ENCODE measurements at regions of chr18 and their contacts with region 1.

Region 1: DNA sequence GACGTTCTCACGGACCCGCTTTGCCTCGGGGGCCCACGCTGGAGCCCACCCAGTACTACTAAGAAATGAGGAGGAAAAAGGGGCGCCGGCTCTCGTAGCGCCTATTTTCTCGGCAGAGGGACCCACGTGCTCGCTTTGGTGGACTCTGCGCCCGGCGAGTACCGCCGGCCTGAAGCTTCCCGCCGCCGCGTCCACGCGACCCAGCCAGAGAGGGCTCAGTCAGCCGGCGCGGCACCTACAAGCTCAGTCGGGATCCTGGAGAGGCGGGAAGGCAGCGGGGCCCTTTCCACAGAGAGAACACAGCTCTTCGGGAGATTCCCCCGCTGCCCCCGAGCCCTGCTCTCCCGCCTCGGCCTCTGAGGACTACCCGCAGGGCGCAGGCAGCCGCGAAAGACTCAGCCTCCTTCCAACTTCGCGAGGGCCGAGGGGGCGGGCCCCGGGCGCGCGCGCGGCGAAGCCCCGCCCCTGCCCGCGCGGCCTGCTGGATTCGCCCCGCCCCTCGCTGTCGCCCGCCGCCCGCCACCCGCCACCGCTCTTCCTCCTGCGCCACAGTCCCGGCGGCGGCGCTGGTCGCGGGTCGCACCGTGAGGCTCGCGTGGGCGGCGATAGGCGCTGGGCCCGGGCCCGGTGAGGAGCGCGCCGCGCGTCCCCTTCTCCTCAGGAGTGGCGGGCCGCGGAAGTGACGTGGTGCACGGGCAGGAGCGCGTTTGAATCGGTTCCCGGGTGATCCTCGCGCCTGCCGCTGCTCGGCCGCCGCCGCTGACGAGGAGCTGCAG is at the start of gene SMCHD1:
- DNase-seq: peak; percentile 96
- ATAC-seq: peak; percentile 82
- H3K4me3 Mint-ChIP-seq: peak within 1 kb of the TSS; percentile 95
- H3K27ac Mint-ChIP-seq: peak within 1 kb of the TSS; percentile 98
- H3K4me1 Mint-ChIP-seq: peaks cover 42% of the 10 kb centered on the region
- H3K27me3 Mint-ChIP-seq: no peaks in the 10 kb centered on the region
- CTCF ChIP-seq: no peak
- total RNA-seq, gene SMCHD1: 97.4 to 98.9 TPM

Region 2: GRCh38 chr18:2571200-2572143 is 83.9 kb before region 1 on chr18 and contains the starts of genes METTL4 and NDC80:
- CTCF ChIA-PET with region 1: interaction called, 3 read pairs
- POLR2A ChIA-PET with region 1: interaction called, 23 read pairs
- intact Hi-C with region 1: loop called (anchors 5 kb)
- DNase-seq: peak; percentile 90
- ATAC-seq: peak; percentile 90
- H3K4me3 Mint-ChIP-seq: peak within 1 kb of the TSS; percentile 99
- H3K27ac Mint-ChIP-seq: peak within 1 kb of the TSS; percentile 99
- H3K4me1 Mint-ChIP-seq: peaks cover 44% of the 10 kb centered on the region
- H3K27me3 Mint-ChIP-seq: no peaks in the 10 kb centered on the region
- CTCF ChIP-seq: no peak
- total RNA-seq, gene METTL4: 18.9 to 20.5 TPM
- total RNA-seq, gene NDC80: 81.3 to 82.2 TPM

Region 3: DNA sequence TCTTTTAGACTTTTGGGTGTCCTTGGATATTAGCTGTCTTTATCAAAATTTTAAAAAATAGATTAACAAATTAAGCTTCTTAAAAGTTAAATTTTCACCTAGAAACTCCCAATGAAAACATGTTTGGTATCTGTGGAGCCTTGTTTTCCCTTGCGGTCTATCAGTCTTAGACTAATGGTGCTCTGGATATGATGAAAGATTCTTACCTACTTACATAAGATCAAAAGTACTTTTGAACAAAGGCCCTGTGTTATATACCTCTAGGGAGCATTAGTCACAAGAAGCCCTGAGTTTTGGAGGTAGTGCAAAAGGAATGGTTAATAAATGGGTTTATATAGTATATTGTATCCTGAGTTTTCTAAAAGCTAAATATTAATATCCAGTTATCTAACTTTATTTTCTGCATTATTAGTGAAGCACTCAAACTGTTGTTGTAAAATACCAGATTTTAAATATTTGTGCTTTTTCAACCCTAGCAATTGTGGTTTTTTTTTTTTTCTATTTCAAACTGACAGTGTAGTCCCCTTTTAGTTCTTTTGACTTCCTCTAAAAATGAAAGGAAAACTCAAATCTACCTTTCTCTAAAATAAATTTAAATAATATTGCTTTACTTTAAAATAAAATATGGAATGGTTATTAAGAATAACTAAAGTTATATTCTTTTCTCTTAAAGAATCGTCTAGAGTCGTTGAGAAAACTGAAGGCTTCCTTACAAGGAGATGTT is 65.9 kb before region 1 on chr18:
- CTCF ChIA-PET with region 1: interaction called, 4 read pairs
- POLR2A ChIA-PET with region 1: interaction called, 21 read pairs
- intact Hi-C with region 1: no loop called
- DNase-seq: no peak
- ATAC-seq: peak; percentile 81
- H3K4me3 Mint-ChIP-seq: peak overlapping the region; percentile 53
- H3K27ac Mint-ChIP-seq: peak overlapping the region; percentile 94
- H3K4me1 Mint-ChIP-seq: peaks cover 56% of the 10 kb centered on the region
- H3K27me3 Mint-ChIP-seq: no peaks in the 10 kb centered on the region
- CTCF ChIP-seq: no peak

Region 4: DNA sequence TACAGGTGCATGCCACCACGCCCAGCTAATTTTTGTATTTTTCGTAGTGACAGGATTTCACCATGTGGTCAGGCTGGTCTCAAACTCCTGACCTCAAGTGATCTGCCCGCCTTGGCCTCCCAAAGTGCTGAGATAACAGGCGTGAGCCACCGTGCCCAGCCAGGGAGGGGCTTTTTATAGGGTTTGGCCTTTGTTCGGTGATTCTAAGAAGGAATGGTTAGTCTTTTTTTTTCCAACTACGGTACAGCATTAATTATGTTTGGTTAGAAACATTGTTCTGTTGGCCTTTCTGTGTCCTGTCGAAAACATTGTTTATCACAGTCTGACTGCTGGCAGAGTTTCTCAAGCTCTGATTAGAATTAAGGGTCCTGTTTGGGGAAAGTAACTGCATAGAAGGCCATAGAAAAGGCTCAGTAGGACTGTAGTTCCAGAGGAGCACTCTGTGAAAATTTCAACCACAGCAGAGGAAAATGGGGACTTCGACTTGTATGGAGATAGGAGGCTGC is 19.2 kb before region 1 on chr18:
- CTCF ChIA-PET with region 1: interaction called, 4 read pairs
- POLR2A ChIA-PET with region 1: interaction called, 76 read pairs
- intact Hi-C with region 1: no loop called
- DNase-seq: no peak
- ATAC-seq: peak; percentile 10
- H3K4me3 Mint-ChIP-seq: peak overlapping the region; percentile 60
- H3K27ac Mint-ChIP-seq: peak overlapping the region; percentile 97
- H3K4me1 Mint-ChIP-seq: peaks cover 73% of the 10 kb centered on the region
- H3K27me3 Mint-ChIP-seq: no peaks in the 10 kb centered on the region
- CTCF ChIP-seq: no peak

Region 5: DNA sequence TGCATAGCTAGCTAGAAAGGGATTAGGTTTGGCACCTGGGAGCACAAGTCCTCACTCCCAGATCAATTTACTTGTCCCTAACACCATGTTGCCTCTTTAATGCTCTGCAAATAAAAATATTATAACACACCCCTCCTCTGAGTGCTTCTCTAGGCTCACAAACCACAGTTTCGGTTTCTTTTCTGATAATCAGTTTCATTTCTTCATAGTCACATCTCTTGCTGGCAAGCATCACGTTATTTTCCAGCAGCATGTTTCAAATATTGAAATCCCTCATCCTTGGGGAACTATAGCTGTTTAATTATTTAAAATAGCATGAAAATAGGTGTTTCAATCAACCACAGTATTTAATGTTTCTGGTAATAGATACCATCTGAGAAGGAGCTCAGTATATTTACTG is 13.7 kb before region 1 on chr18:
- CTCF ChIA-PET with region 1: interaction called, 4 read pairs
- POLR2A ChIA-PET with region 1: interaction called, 76 read pairs
- intact Hi-C with region 1: no loop called
- DNase-seq: no peak
- ATAC-seq: peak; percentile 71
- H3K4me3 Mint-ChIP-seq: peak overlapping the region; percentile 51
- H3K27ac Mint-ChIP-seq: peak overlapping the region; percentile 75
- H3K4me1 Mint-ChIP-seq: peaks cover 50% of the 10 kb centered on the region
- H3K27me3 Mint-ChIP-seq: no peaks in the 10 kb centered on the region
- CTCF ChIP-seq: no peak

Region 6: DNA sequence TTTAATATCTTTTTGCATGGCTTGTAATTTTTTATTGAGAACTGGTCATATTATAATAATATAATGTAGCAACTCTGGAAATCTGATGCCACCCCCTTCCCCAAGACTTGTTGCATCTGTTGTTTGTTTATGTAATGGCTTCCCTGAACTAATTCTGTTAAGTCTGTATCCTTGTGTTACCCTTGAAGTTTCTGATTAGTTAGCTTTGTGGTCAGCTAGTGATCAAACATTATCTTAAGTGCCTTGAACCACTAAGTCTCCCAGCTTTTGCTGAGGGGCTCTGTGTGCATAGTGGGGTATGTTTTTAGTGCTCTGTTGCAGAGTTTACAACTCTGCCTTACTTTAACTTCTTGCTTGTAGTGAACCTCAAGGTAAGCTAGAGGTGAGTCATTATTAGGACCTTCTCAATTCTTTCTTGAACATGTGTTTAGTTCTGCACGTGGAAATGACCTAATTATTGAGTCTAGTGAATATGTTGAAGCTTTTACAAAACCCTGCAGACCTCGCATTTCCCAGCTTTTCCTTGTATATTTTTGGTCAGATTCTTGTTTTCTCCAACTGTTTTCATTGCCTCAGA is 24.9 kb after region 1 on chr18:
- CTCF ChIA-PET with region 1: no interaction called
- POLR2A ChIA-PET with region 1: interaction called, 28 read pairs
- intact Hi-C with region 1: no loop called
- DNase-seq: no peak
- ATAC-seq: no peak
- H3K4me3 Mint-ChIP-seq: no peak overlapping the region
- H3K27ac Mint-ChIP-seq: peak overlapping the region; percentile 62
- H3K4me1 Mint-ChIP-seq: peaks cover 60% of the 10 kb centered on the region
- H3K27me3 Mint-ChIP-seq: no peaks in the 10 kb centered on the region
- CTCF ChIP-seq: no peak

Region 7: DNA sequence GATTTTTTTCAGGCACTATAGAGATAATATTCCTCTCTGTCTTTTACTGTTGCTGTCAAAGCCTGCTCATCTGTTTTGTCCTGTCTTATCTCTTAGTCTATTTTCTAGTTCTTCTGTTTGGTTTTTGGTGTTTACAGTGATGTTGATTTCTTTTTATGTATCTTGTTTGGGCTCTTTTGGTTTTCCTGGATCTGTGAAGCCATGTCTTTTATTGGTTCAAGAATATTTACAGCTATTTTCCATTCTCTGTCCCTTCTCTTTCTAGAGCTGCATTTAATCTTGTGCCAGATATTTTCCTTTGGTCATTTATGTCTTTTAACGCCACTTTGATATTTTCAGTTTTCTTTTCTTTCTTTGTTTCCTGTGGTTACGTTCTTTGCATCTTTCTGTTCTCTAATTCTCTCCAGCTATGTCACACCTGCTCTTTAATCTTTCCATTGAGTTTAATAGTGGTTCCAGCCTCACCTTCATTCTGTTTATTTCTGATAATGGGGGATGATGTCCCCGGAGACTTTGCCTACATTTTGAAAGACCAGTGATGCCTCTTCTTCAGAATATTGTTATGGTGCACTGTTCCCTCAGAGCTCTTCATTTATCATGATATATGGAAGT is 32.1 kb after region 1 on chr18:
- CTCF ChIA-PET with region 1: interaction called, 6 read pairs
- POLR2A ChIA-PET with region 1: interaction called, 13 read pairs
- intact Hi-C with region 1: no loop called
- DNase-seq: no peak
- ATAC-seq: peak; percentile 32
- H3K4me3 Mint-ChIP-seq: peak overlapping the region; percentile 31
- H3K27ac Mint-ChIP-seq: peak overlapping the region; percentile 91
- H3K4me1 Mint-ChIP-seq: peaks cover 69% of the 10 kb centered on the region
- H3K27me3 Mint-ChIP-seq: no peaks in the 10 kb centered on the region
- CTCF ChIP-seq: no peak

Region 8: DNA sequence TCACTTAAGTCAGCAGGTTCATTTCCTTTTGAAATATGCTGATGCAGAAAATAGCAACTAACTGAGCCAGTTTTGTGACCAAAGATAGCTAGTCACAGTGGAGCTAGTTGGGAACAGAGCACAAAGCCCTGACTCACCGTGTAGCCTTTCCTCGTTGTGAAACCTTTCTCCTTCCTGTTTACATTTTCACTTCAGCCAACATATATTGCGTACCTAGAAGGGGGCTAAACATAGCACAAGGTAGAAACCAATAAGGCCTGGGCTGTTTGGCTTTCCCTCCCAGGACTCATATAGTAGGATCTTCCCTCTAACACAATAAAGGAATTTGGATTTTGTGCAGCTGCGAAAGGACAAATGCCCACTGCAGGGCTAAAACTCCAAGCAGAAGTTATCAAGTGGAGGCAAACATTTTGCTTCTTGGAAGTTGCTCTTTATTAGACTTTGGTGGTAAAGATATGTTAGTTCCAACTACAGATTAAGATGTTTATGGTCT is 382.1 kb after region 1 on chr18:
- CTCF ChIA-PET with region 1: no interaction called
- POLR2A ChIA-PET with region 1: no interaction called
- intact Hi-C with region 1: no loop called
- DNase-seq: peak; percentile 46
- ATAC-seq: peak; percentile 95
- H3K4me3 Mint-ChIP-seq: no peak overlapping the region
- H3K27ac Mint-ChIP-seq: no peak overlapping the region
- H3K4me1 Mint-ChIP-seq: peaks cover 19% of the 10 kb centered on the region
- H3K27me3 Mint-ChIP-seq: no peaks in the 10 kb centered on the region
- CTCF ChIP-seq: no peak

Measured in activated CD8-positive, alpha-beta T cell treated with anti-CD3 and anti-CD28 coated beads for 36 hours (primary cell).